ENCODE measurements at regions of chr3 and their contacts with region 1.

Region 1: GRCh38 chr3:46208167-46208704 is at the start of gene CCR1:
- DNase-seq: peak; percentile 88 to 93 (median 91)
- H3K4me3 ChIP-seq: peak within 1 kb of the TSS; percentile 70 to 99 (median 82)
- H3K4me3 Mint-ChIP-seq: peak within 1 kb of the TSS; percentile 94 to 97
- H3K27ac ChIP-seq: peak within 1 kb of the TSS; percentile 84 to 96
- H3K27ac Mint-ChIP-seq: peak within 1 kb of the TSS; percentile 96 to 100 (median 99)
- H3K4me1 ChIP-seq: peaks cover 77 to 86% of the 10 kb centered on the region in 2 donors
- H3K4me1 Mint-ChIP-seq: peaks cover 69% of the 10 kb centered on the region
- H3K27me3 ChIP-seq: no peaks in the 10 kb centered on the region
- H3K27me3 Mint-ChIP-seq: peaks cover 0 to 2% (median 0%) of the 10 kb centered on the region in 3 donors
- CTCF ChIP-seq: peak; percentile 66
- polyA plus RNA-seq, gene CCR1: 56.7 to 304 (median 233) TPM

Region 2: DNA sequence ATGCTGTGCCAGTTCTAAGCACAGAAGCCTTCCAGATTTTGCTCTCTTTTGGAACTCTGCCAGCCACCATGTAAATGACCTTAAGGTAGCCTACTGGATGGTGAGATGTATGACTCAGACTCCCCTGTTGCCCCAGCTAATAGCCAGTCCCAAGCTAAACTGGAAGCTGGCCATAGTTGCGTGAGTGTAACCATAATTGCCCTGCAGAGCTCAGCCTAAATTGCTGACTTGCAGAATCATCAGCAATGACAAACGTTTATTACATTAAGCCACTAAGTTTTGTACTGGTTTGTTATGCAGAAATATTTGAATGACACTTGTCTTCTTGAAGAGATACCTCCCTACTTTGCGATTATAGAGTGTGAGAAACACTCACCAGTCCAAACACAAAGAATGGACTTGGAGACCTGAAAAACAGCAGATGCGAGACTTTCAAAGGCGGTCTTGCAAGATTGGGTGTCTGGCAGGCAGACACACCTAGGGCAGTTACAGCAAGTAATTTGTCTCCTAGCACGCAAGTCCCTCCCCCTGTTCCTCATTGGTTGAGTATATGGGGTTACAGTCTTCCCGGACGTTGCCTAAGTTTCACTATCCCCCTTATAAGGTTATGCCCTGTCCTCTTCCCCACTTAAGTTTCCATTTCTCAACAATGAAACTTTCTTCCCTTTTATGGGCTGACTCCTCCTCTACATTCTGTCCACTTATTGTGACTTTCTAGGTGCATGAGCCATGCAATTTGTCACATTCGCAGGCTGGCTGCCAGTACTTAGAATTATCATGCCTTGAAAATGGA is 97.3 kb before region 1 on chr3:
- intact Hi-C with region 1: loop called in 1 of 2 experiments (anchors 5 kb)
- DNase-seq: peak; percentile 97 to 100 (median 99)
- H3K4me3 ChIP-seq: no peak overlapping the region
- H3K4me3 Mint-ChIP-seq: peak overlapping the region; percentile 61 to 87
- H3K27ac ChIP-seq: peak overlapping the region; percentile 91 to 99
- H3K27ac Mint-ChIP-seq: peak overlapping the region; percentile 98 to 100 (median 100)
- H3K4me1 ChIP-seq: peaks cover 69 to 86% of the 10 kb centered on the region in 2 donors
- H3K4me1 Mint-ChIP-seq: peaks cover 73% of the 10 kb centered on the region
- H3K27me3 ChIP-seq: no peaks in the 10 kb centered on the region
- H3K27me3 Mint-ChIP-seq: no peaks in the 10 kb centered on the region
- CTCF ChIP-seq: no peak

Region 3: GRCh38 chr3:46143951-46144473 is 64.2 kb before region 1 on chr3:
- intact Hi-C with region 1: loop called in 1 of 2 experiments (anchors 5 kb)
- DNase-seq: peak; percentile 31 to 53 (median 51)
- H3K4me3 ChIP-seq: peak overlapping the region in 1 of 3 experiments; percentile 30
- H3K4me3 Mint-ChIP-seq: peak overlapping the region in 1 of 2 donors; percentile 36
- H3K27ac ChIP-seq: peak overlapping the region; percentile 51 to 83
- H3K27ac Mint-ChIP-seq: peak overlapping the region; percentile 75 to 90 (median 87)
- H3K4me1 ChIP-seq: peaks cover 35 to 40% of the 10 kb centered on the region in 2 donors
- H3K4me1 Mint-ChIP-seq: peaks cover 41% of the 10 kb centered on the region
- H3K27me3 ChIP-seq: no peaks in the 10 kb centered on the region
- H3K27me3 Mint-ChIP-seq: no peaks in the 10 kb centered on the region
- CTCF ChIP-seq: no peak

Region 4: GRCh38 chr3:46222435-46223161 is 14.4 kb after region 1 on chr3:
- intact Hi-C with region 1: loop called in 1 of 2 experiments (anchors 2 kb)
- DNase-seq: peak; percentile 91 to 96 (median 95)
- H3K4me3 ChIP-seq: peak overlapping the region in 1 of 3 experiments; percentile 28
- H3K4me3 Mint-ChIP-seq: peak overlapping the region; percentile 50 to 79
- H3K27ac ChIP-seq: peak overlapping the region; percentile 92 to 95
- H3K27ac Mint-ChIP-seq: peak overlapping the region; percentile 91 to 98 (median 97)
- H3K4me1 ChIP-seq: peaks cover 39 to 41% of the 10 kb centered on the region in 2 donors
- H3K4me1 Mint-ChIP-seq: peaks cover 37% of the 10 kb centered on the region
- H3K27me3 ChIP-seq: no peaks in the 10 kb centered on the region
- H3K27me3 Mint-ChIP-seq: peaks cover 0 to 3% (median 0%) of the 10 kb centered on the region in 3 donors
- CTCF ChIP-seq: no peak

Measured in CD14-positive monocyte (primary cell).